ENCODE measurements at regions of chr10 and their contacts with region 1.

Region 1: GRCh38 chr10:3785257-3785850 is 345 bp upstream of the KLF6 start:
- DNase-seq: peak; percentile 85 to 98
- H3K4me3 ChIP-seq: peak overlapping the region; percentile 85
- H3K27ac ChIP-seq: peak overlapping the region; percentile 92
- H3K4me1 ChIP-seq: peaks cover 26% of the 10 kb centered on the region
- H3K27me3 ChIP-seq: no peaks in the 10 kb centered on the region
- CTCF ChIP-seq: no peak

Region 2: GRCh38 chr10:3095373-3096139 is 689.8 kb before region 1 on chr10:
- CTCF ChIA-PET with region 1: no interaction called
- POLR2A ChIA-PET with region 1: interaction called, 10 read pairs
- intact Hi-C with region 1: no loop called
- DNase-seq: peak; percentile 68 to 98
- H3K4me3 ChIP-seq: peak overlapping the region; percentile 25; the same call in 1 of the 2 replicates
- H3K27ac ChIP-seq: peak overlapping the region; percentile 99
- H3K4me1 ChIP-seq: peaks cover 54% of the 10 kb centered on the region
- H3K27me3 ChIP-seq: no peaks in the 10 kb centered on the region
- CTCF ChIP-seq: no peak

Region 3: GRCh38 chr10:3494131-3494837 is 291.1 kb before region 1 on chr10:
- CTCF ChIA-PET with region 1: no interaction called
- POLR2A ChIA-PET with region 1: no interaction called
- intact Hi-C with region 1: loop called (anchors 5 kb)
- DNase-seq: peak; percentile 50 to 75
- H3K4me3 ChIP-seq: peak overlapping the region; percentile 32
- H3K27ac ChIP-seq: peak overlapping the region; percentile 81
- H3K4me1 ChIP-seq: peaks cover 18% of the 10 kb centered on the region
- H3K27me3 ChIP-seq: no peaks in the 10 kb centered on the region
- CTCF ChIP-seq: no peak

Region 4: GRCh38 chr10:3740157-3740871 is 45.0 kb before region 1 on chr10:
- CTCF ChIA-PET with region 1: no interaction called
- POLR2A ChIA-PET with region 1: no interaction called
- intact Hi-C with region 1: loop called (anchors 1 kb)
- DNase-seq: peak in 1 of 2 experiments; percentile 97
- H3K4me3 ChIP-seq: peak overlapping the region; percentile 24; the same call in 1 of the 2 replicates
- H3K27ac ChIP-seq: peak overlapping the region; percentile 96
- H3K4me1 ChIP-seq: peaks cover 40% of the 10 kb centered on the region
- H3K27me3 ChIP-seq: no peaks in the 10 kb centered on the region
- CTCF ChIP-seq: no peak

Region 5: GRCh38 chr10:3828404-3829155 is 43.2 kb after region 1 on chr10:
- CTCF ChIA-PET with region 1: no interaction called
- POLR2A ChIA-PET with region 1: interaction called, 8 read pairs
- intact Hi-C with region 1: loop called (anchors 1 kb)
- DNase-seq: no peak
- H3K4me3 ChIP-seq: no peak overlapping the region
- H3K27ac ChIP-seq: no peak overlapping the region
- H3K4me1 ChIP-seq: peaks cover 31% of the 10 kb centered on the region
- H3K27me3 ChIP-seq: no peaks in the 10 kb centered on the region
- CTCF ChIP-seq: no peak

Region 6: GRCh38 chr10:4241724-4242345 is 456.5 kb after region 1 on chr10:
- CTCF ChIA-PET with region 1: no interaction called
- POLR2A ChIA-PET with region 1: interaction called, 7 read pairs
- intact Hi-C with region 1: loop called (anchors 5 kb)
- DNase-seq: peak in 1 of 2 experiments; percentile 27
- H3K4me3 ChIP-seq: no peak overlapping the region
- H3K27ac ChIP-seq: no peak overlapping the region
- H3K4me1 ChIP-seq: peaks cover 22% of the 10 kb centered on the region
- H3K27me3 ChIP-seq: no peaks in the 10 kb centered on the region
- CTCF ChIP-seq: no peak